Calu3 (cell line): ENCODE measurements at regions of chr7 and their contacts with region 1.

Region 1: DNA sequence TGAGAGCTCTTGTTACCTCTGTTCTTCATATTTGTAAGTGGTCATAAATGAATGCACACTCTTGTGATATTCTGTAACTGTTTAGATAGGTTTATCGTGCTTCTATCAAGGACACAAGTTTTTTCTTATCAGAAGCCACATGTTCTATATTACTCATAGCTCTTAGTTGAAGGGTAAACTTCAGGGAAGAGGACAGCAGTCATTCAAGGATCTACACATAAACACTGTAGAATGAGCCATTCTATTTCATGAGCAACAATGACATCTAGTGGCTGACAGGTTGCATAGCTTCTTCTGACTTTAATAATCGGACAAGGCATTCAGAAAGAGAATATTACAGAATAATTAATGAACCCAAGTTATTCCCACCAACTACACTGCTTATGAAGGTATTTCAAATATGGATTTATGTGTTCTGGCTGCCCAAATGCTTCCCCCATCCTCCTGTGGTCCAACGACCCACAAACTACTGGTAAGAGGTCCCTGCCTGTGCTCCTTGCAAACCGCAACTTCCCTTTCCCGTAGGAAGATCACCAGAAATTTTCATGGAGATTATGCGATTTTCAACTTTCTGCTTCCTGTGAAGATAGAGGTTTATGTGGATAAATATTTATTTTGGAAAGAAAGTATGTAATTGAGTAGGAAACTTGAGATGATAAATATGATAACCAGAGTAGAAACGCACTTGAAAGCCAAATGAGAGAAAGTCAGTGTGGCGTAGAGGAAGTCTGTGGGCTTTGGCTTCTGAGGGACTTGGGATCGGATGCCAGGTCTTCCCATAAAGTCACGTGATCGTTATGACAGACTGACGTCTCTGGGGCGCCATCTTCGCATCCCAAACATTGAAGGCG is 16.8 kb upstream of the ABCB5 start:
- DNase-seq: peak; percentile 35
- H3K4me3 Mint-ChIP-seq: no peak overlapping the region
- H3K27ac Mint-ChIP-seq: peak overlapping the region; percentile 55
- H3K4me1 Mint-ChIP-seq: peaks cover 17% of the 10 kb centered on the region
- H3K27me3 Mint-ChIP-seq: no peaks in the 10 kb centered on the region
- CTCF ChIP-seq: peak; percentile 72

Region 2: GRCh38 chr7:19713676-19714075 is 885.0 kb before region 1 on chr7:
- CTCF ChIA-PET with region 1: interaction called, 122 read pairs
- intact Hi-C with region 1: loop called (anchors 1 kb)
- DNase-seq: peak; percentile 66
- H3K4me3 Mint-ChIP-seq: no peak overlapping the region
- H3K27ac Mint-ChIP-seq: no peak overlapping the region
- H3K4me1 Mint-ChIP-seq: peaks cover 31% of the 10 kb centered on the region
- H3K27me3 Mint-ChIP-seq: no peaks in the 10 kb centered on the region
- CTCF ChIP-seq: peak; percentile 53

Region 3: GRCh38 chr7:19982841-19983835 is 615.5 kb before region 1 on chr7:
- CTCF ChIA-PET with region 1: interaction called, 9 read pairs
- intact Hi-C with region 1: loop called (anchors 5 kb)
- DNase-seq: peak; percentile 61
- H3K4me3 Mint-ChIP-seq: no peak overlapping the region
- H3K27ac Mint-ChIP-seq: no peak overlapping the region
- H3K4me1 Mint-ChIP-seq: no peaks in the 10 kb centered on the region
- H3K27me3 Mint-ChIP-seq: no peaks in the 10 kb centered on the region
- CTCF ChIP-seq: no peak

Region 4: GRCh38 chr7:20219446-20220292 is 379.0 kb before region 1 on chr7:
- CTCF ChIA-PET with region 1: interaction called, 11 read pairs
- intact Hi-C with region 1: loop called (anchors 5 kb)
- DNase-seq: peak; percentile 98
- H3K4me3 Mint-ChIP-seq: peak overlapping the region; percentile 73
- H3K27ac Mint-ChIP-seq: peak overlapping the region; percentile 95
- H3K4me1 Mint-ChIP-seq: peaks cover 61% of the 10 kb centered on the region
- H3K27me3 Mint-ChIP-seq: no peaks in the 10 kb centered on the region
- CTCF ChIP-seq: no peak

Region 5: DNA sequence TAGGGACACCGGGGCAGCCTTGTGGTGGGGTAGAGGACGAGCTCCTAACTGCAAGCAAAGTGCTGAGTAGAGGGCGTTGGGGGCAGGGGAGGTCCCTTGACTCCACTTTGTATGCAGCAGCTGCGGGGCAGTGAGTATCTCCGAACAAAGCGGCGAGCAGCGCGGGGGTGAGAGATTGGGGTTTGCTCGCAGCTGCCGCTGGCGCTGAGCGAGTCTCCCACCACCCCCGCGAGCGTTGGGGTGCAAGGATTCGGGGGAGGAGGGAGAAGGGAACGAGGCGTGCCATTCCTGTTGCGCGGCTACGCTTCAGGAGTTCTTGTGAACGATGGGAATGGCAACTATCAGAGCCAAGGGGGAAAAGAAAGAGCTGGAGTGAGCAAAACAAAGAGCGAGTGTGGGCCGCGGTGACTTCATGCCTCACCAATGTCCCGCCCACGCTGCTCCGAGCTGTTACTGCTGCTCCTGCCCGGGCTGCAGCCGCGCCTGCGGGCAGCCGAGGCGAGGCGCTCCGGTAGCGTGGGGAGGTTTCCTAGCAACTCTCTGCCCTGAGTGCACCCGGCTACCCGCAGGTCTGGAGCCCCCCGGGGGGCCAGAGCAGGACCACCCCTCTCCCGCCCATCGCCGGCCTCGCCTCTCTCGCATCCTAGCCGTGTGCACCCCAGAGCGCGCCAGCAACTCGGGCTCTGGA is 268.3 kb before region 1 on chr7 and contains the start of gene ITGB8:
- CTCF ChIA-PET with region 1: interaction called, 17 read pairs
- intact Hi-C with region 1: loop called (anchors 1 kb)
- DNase-seq: peak; percentile 93
- H3K4me3 Mint-ChIP-seq: peak within 1 kb of the TSS; percentile 93
- H3K27ac Mint-ChIP-seq: peak within 1 kb of the TSS; percentile 98
- H3K4me1 Mint-ChIP-seq: peaks cover 21% of the 10 kb centered on the region
- H3K27me3 Mint-ChIP-seq: no peaks in the 10 kb centered on the region
- CTCF ChIP-seq: no peak
- total RNA-seq, gene ITGB8: 157 and 183 TPM in 2 replicates

Region 6: GRCh38 chr7:20407585-20408461 is 190.9 kb before region 1 on chr7:
- CTCF ChIA-PET with region 1: interaction called, 28 read pairs
- intact Hi-C with region 1: loop called (anchors 5 kb)
- DNase-seq: peak; percentile 77
- H3K4me3 Mint-ChIP-seq: peak overlapping the region; percentile 22
- H3K27ac Mint-ChIP-seq: peak overlapping the region; percentile 83
- H3K4me1 Mint-ChIP-seq: peaks cover 52% of the 10 kb centered on the region
- H3K27me3 Mint-ChIP-seq: no peaks in the 10 kb centered on the region
- CTCF ChIP-seq: no peak

Region 7: GRCh38 chr7:20647908-20648776 is 49.5 kb after region 1 on chr7:
- CTCF ChIA-PET with region 1: interaction called, 6 read pairs
- intact Hi-C with region 1: loop called (anchors 5 kb)
- DNase-seq: peak; percentile 77
- H3K4me3 Mint-ChIP-seq: no peak overlapping the region
- H3K27ac Mint-ChIP-seq: no peak overlapping the region
- H3K4me1 Mint-ChIP-seq: peaks cover 9% of the 10 kb centered on the region
- H3K27me3 Mint-ChIP-seq: no peaks in the 10 kb centered on the region
- CTCF ChIP-seq: peak; percentile 92